AG04449 (cell line): ENCODE measurements at regions of chr11 and their contacts with region 1.

Region 1: GRCh38 chr11:72471005-72471898 is 36.9 kb upstream of the CLPB start:
- DNase-seq: no peak
- H3K4me3 ChIP-seq: no peak overlapping the region
- CTCF ChIP-seq: peak; percentile 82

Region 2: DNA sequence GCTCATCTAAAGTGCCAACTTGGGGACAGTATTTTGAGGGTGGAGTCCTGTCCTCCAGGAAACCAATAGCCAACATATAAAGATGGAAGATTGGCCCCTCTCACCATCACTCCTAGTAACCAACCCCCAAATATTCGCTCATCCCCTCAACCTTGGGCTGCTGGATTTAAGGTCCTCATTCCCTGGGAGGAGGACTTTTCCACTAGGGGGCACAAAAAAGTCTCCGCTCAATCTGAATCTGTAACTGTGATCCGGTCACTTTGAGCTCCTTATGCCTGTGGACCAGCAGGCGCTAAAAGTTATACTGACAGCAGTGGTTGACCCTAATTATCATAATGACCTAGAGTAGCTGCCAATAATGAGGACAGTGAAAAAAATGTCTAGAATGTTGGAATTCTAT is 16.5 kb before region 1 on chr11:
- CTCF ChIA-PET with region 1: interaction called, 50 read pairs
- POLR2A ChIA-PET with region 1: no interaction called
- DNase-seq: no peak
- H3K4me3 ChIP-seq: no peak overlapping the region
- CTCF ChIP-seq: no peak

Region 3: GRCh38 chr11:72493426-72494108 is 22.3 kb after region 1 on chr11:
- CTCF ChIA-PET with region 1: interaction called, 26 read pairs
- POLR2A ChIA-PET with region 1: no interaction called
- DNase-seq: no peak
- H3K4me3 ChIP-seq: no peak overlapping the region
- CTCF ChIP-seq: no peak

Region 4: DNA sequence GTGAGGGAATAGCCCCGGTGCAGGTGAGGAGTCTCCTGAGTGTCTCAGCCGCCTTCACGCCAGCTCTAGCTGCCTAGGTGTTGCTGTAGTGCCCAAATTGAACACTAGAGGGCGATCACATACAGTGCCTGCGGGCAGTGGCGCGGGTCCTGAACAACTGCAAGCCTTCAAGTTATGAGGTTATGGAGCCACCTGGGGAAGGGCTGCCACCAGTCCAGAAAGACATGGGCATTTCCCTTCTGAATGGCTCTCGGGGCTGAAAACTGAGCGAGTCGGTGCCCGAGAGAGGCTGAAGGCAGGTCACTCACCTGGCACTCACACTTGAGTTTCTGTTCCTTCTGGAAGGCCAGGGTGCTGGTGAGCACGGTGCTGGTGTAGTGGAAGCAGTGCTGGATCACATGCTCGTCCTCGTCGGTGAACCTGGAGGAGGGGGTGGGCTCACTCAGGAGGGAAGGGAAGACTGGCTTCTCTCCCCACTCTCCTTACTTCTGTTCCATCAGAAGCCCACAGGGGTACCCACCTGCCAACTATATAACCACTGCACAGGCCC is 114.6 kb after region 1 on chr11:
- CTCF ChIA-PET with region 1: interaction called, 40 read pairs
- POLR2A ChIA-PET with region 1: no interaction called
- DNase-seq: no peak
- H3K4me3 ChIP-seq: no peak overlapping the region
- CTCF ChIP-seq: peak; percentile 79

Region 5: DNA sequence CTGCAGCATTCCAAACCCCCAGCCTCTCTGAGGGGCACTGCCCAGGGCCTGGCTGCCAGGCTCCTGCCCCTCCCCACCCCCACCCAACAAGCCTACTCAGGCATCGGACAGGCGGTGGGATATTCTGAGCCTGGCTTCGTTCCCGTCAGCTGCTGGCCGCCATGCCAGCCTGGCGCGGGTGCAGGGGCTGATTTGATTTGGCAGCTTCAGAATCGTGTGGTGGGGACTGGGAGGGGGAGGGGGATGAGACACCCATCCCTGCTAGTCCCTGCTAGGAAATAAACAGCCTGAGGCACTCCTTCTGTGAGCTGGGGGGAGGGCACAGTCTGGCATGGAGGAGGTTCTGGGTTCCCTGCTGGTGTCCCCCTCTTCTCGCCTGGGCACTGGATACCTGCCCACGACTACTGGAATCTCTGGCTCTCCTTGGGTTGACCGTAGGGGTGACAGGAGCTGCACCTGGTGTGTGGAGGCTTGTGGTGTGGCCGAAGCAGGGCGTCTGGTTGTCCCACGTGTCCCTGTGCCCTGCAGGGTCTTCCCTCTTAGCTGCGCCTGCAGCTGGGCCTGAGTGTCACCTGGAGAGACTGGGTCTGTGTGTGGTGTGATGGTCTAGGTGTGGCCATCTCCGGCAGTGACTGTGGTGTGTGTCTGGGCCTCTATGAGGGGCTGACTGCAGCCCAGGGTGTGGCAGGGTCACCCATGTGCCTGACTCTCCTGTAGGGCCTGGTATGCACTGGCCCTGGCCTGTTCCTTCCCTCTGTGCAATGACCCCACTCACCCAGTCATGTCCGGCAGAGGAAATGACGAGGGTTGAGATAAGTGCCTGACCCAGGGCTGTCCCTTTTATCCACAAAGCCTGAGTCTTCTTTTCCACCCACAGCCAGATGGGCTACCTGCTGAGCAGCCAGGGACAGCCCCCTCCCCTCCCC is 160.8 kb after region 1 on chr11:
- CTCF ChIA-PET with region 1: interaction called, 13 read pairs
- POLR2A ChIA-PET with region 1: no interaction called
- DNase-seq: no peak
- H3K4me3 ChIP-seq: no peak overlapping the region
- CTCF ChIP-seq: no peak

Region 6: GRCh38 chr11:72668611-72669347 is 197.5 kb after region 1 on chr11:
- CTCF ChIA-PET with region 1: interaction called, 13 read pairs
- POLR2A ChIA-PET with region 1: no interaction called
- DNase-seq: no peak
- H3K4me3 ChIP-seq: no peak overlapping the region
- CTCF ChIP-seq: no peak